Heart right ventricle (tissue), 16 donors: ENCODE measurements at regions of chr22 and their contacts with region 1.

Region 1: DNA sequence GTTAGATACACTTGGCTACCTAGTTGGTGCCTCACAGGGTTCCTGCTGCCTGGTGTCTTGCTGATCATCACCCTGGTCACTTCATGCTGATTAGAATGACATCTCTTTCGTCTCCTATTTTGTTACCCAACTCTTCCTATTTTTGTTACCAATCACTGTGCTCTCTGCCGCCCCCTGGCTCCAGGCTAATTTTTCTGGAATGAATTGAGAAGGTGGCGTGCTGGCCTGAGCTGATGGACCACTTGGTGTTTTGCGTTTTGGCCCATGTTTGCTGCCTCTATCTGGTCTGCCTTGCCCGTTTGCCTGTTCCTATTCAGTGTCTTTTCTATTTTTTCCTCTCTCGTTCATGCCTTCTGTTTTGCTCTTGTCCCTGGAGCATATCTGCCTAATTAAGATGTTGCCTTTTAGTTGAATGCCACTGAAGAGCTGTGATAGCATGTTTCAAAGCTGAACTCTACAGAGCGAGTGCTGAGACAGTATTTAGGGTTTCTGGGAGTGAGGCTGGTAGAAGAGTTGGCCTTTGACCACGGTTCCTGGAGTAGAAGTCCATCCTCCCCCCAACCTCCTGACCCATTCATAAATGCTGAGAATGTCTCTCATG is 5.9 kb upstream of the ATF4 start:
- DNase-seq: peak in 1 of 2 donors; percentile 64
- ATAC-seq: peak in 5 of 8 donors; percentile 6 to 48 (median 27)
- H3K4me3 ChIP-seq: no peak overlapping the region
- H3K27ac ChIP-seq: peak overlapping the region in 1 of 10 donors; percentile 44
- H3K4me1 ChIP-seq: peaks cover 5 to 34% (median 21%) of the 10 kb centered on the region in 9 donors
- H3K27me3 ChIP-seq: no peaks in the 10 kb centered on the region
- CTCF ChIP-seq: peak; percentile 56 to 81 (median 79)

Region 2: GRCh38 chr22:39170825-39171622 is 343.4 kb before region 1 on chr22:
- intact Hi-C with region 1: loop called in 1 of 10 experiments (anchors 5 kb)
- DNase-seq: peak; percentile 83 to 89
- ATAC-seq: peak; percentile 70 to 86 (median 82)
- H3K4me3 ChIP-seq: peak overlapping the region in 3 of 10 donors; percentile 10 to 23 (median 18)
- H3K27ac ChIP-seq: peak overlapping the region in 6 of 10 donors; percentile 0 to 92 (median 27)
- H3K4me1 ChIP-seq: peaks cover 32 to 57% (median 53%) of the 10 kb centered on the region in 9 donors
- H3K27me3 ChIP-seq: no peaks in the 10 kb centered on the region
- CTCF ChIP-seq: peak; percentile 93 to 97 (median 96)

Region 3: GRCh38 chr22:39405346-39406085 is 109.0 kb before region 1 on chr22:
- intact Hi-C with region 1: loop called in 3 of 10 experiments (anchors 5 to 10 kb)
- DNase-seq: no peak
- ATAC-seq: peak in 6 of 8 donors; percentile 47 to 66 (median 59)
- H3K4me3 ChIP-seq: peak overlapping the region in 4 of 10 donors; percentile 5 to 33 (median 20)
- H3K27ac ChIP-seq: peak overlapping the region in 4 of 10 donors; percentile 32 to 41 (median 37)
- H3K4me1 ChIP-seq: peaks cover 0 to 48% (median 20%) of the 10 kb centered on the region in 9 donors
- H3K27me3 ChIP-seq: no peaks in the 10 kb centered on the region
- CTCF ChIP-seq: peak in 1 of 9 donors; percentile 11

Region 4: DNA sequence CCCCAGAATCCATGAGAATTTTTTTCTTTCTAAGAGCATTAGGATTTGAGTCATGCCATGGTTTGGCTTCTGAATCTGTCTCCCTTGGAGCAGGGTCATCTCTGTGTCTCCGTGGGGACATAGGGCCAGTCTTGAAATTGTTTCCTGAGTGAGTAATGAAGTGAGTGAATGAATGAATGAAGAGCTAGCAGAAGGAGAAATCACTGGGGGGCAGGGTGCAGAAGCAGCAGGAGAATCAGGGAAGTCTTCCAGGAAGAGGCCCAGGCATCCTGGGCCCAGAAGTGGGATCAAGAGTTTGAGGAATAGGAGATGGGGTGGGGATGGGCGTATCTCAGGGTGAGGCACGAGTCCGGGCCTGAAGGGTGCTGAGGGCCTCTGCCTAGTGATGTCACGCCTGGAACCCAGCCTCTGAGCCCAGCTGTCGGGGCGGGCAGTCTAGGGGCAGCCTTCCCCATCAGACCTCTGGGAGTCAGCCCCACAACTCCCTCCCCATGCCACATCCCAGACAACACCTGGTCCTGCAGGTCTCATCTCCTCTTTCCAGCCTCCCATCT is 70.1 kb before region 1 on chr22:
- intact Hi-C with region 1: loop called in 1 of 10 experiments (anchors 5 kb)
- DNase-seq: no peak
- ATAC-seq: no peak
- H3K4me3 ChIP-seq: no peak overlapping the region
- H3K27ac ChIP-seq: no peak overlapping the region
- H3K4me1 ChIP-seq: peaks cover 0 to 5% (median 0%) of the 10 kb centered on the region in 9 donors
- H3K27me3 ChIP-seq: peaks cover 0 to 13% (median 0%) of the 10 kb centered on the region in 7 donors
- CTCF ChIP-seq: no peak